A673 (cell line): ENCODE measurements at regions of chr10 and their contacts with region 1.

Region 1: GRCh38 chr10:101031128-101031795 is at the starts of genes PDZD7 and SFXN3:
- DNase-seq: peak; percentile 95
- H3K4me3 ChIP-seq: peak within 1 kb of the TSS; percentile 56
- H3K27ac ChIP-seq: peak within 1 kb of the TSS; percentile 68
- H3K4me1 ChIP-seq: peaks cover 11% of the 10 kb centered on the region
- H3K27me3 ChIP-seq: no peaks in the 10 kb centered on the region
- CTCF ChIP-seq: no peak
- total RNA-seq, gene PDZD7: 0.26 and 0.30 TPM in 2 replicates
- total RNA-seq, gene SFXN3: 15.5 and 16.9 TPM in 2 replicates

Region 2: DNA sequence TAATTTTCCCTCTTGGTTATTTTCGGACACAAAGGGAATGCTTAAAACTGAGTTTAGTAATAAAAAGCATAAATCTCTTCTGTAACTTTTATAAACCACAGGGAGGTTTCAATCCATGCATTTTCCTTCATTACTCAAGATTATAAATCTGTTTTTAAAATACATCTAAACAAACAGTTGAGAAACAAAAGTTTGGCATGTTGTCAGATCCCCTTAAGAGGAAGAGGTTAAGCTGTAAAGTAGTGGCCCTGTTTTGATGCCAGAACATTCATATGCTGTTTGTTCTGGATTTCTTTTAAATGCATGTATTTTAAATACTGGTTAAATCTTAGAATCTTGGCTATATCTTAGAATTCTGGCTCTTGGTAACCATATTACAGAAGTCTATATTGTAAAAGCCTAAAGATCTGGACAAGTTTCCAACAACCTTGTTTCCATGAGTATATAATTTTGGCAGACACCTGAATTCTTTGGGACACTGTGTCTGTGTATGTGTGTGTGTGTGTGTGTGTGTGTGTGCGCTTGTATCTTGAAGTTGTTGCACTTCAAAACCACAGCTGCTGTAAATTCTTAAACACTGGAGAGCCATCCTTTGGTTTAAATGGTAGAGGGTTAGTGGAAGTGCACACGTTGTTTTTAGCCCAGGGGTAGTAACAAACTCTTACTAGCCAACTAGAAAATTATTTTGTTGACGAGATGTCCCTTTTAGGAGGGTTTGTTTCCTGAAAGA is 68.7 kb before region 1 on chr10:
- CTCF ChIA-PET with region 1: no interaction called
- POLR2A ChIA-PET with region 1: no interaction called
- intact Hi-C with region 1: no loop called
- DNase-seq: no peak
- H3K4me3 ChIP-seq: no peak overlapping the region
- H3K27ac ChIP-seq: no peak overlapping the region
- H3K4me1 ChIP-seq: peaks cover 9% of the 10 kb centered on the region
- H3K27me3 ChIP-seq: no peaks in the 10 kb centered on the region
- CTCF ChIP-seq: no peak

Region 3: GRCh38 chr10:101012525-101013364 is 18.5 kb before region 1 on chr10:
- CTCF ChIA-PET with region 1: interaction called, 13 read pairs
- POLR2A ChIA-PET with region 1: interaction called, 7 read pairs
- intact Hi-C with region 1: no loop called
- DNase-seq: peak; percentile 95
- H3K4me3 ChIP-seq: no peak overlapping the region
- H3K27ac ChIP-seq: no peak overlapping the region
- H3K4me1 ChIP-seq: peaks cover 9% of the 10 kb centered on the region
- H3K27me3 ChIP-seq: no peaks in the 10 kb centered on the region
- CTCF ChIP-seq: peak; percentile 99

Region 4: DNA sequence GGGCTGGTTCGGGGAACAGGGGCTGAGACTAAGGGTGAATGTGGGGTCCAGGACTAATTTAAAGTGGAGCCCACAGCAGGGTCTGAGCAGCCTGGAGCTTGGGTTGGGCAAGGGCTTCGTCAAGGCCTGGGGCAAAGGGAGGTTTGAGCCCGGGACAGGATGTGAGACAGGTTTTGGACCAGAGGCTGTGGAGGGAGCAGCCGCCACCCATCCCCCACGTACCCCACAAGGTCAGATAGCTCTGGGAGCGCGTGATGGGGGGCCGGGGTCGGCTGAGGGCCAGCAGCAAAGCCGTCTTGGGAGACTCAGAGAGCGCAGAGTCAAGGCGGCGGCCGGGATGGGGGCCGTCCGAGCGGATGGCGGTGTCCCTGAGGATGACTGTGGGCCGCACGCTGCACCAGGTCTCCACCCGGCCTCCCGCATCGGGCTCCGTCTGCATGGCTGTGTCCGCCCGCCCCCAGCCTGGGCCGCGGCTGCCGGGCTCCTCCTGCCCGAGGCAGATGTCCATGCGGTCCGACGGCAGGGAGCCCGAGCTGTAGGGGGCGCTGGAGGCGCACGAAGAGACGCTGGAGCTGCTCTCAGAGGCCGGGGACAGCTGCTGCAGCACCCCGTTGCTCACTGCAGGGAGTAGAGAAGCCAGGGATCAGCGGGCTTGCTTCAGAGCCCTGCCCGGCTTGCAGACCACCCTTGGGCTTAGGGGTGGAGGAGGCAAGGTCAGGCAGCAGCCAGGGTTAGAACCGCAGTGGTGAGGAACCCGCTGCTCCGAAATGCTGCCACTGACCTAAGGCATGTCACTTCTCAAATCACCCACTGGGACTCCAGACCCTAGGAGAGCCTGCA is 12.4 kb before region 1 on chr10:
- CTCF ChIA-PET with region 1: interaction called, 13 read pairs
- POLR2A ChIA-PET with region 1: interaction called, 7 read pairs
- intact Hi-C with region 1: no loop called
- DNase-seq: peak; percentile 88
- H3K4me3 ChIP-seq: no peak overlapping the region
- H3K27ac ChIP-seq: no peak overlapping the region
- H3K4me1 ChIP-seq: no peaks in the 10 kb centered on the region
- H3K27me3 ChIP-seq: no peaks in the 10 kb centered on the region
- CTCF ChIP-seq: peak; percentile 92

Region 5: DNA sequence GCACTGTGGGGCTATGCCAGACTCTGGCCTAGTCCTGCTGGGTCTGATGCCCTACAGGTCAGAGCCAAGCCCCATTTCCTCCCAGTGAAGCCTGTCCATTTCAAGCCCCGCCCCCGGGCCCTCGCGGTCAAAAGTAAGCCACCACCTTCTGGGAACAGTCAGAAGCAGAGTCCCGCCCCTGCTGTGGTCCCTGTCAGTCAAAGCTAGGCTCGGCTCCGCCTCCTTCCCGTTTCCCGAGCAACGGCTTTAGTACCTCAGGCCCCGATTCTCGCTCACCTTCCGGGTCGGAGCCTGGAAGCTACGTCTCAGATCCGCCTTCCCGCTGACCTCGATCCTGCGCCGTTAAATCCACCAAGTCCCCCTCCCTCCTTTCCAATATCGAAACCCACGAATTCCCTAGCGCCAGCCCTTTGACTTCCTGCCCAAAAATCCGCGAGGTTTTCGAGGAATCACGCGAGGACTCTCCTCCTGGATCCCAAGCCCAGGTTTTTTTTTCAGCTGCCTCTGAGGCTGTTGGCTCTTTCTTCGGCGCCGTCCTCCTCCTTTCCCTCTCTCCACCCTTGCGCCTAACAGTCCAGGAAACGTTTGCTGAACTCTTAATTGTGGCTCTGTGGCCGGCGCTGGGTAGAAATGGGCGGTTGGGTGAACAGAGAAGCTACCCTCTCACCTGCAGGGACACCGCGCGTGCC is 11.5 kb after region 1 on chr10:
- CTCF ChIA-PET with region 1: interaction called, 14 read pairs
- POLR2A ChIA-PET with region 1: interaction called, 9 read pairs
- intact Hi-C with region 1: no loop called
- DNase-seq: peak; percentile 93
- H3K4me3 ChIP-seq: peak overlapping the region; percentile 54
- H3K27ac ChIP-seq: peak overlapping the region; percentile 84
- H3K4me1 ChIP-seq: peaks cover 37% of the 10 kb centered on the region
- H3K27me3 ChIP-seq: no peaks in the 10 kb centered on the region
- CTCF ChIP-seq: no peak

Region 6: GRCh38 chr10:101050208-101051069 is 19.2 kb after region 1 on chr10:
- CTCF ChIA-PET with region 1: interaction called, 11 read pairs
- POLR2A ChIA-PET with region 1: no interaction called
- intact Hi-C with region 1: no loop called
- DNase-seq: peak; percentile 75
- H3K4me3 ChIP-seq: peak overlapping the region; percentile 29
- H3K27ac ChIP-seq: no peak overlapping the region
- H3K4me1 ChIP-seq: peaks cover 24% of the 10 kb centered on the region
- H3K27me3 ChIP-seq: no peaks in the 10 kb centered on the region
- CTCF ChIP-seq: peak; percentile 95

Region 7: GRCh38 chr10:101080933-101081931 is 50.0 kb after region 1 on chr10:
- CTCF ChIA-PET with region 1: no interaction called
- POLR2A ChIA-PET with region 1: no interaction called
- intact Hi-C with region 1: no loop called
- DNase-seq: no peak
- H3K4me3 ChIP-seq: no peak overlapping the region
- H3K27ac ChIP-seq: no peak overlapping the region
- H3K4me1 ChIP-seq: no peaks in the 10 kb centered on the region
- H3K27me3 ChIP-seq: peaks cover 44% of the 10 kb centered on the region
- CTCF ChIP-seq: no peak